ENCODE measurements at regions of chr18 and their contacts with region 1.

Region 1: DNA sequence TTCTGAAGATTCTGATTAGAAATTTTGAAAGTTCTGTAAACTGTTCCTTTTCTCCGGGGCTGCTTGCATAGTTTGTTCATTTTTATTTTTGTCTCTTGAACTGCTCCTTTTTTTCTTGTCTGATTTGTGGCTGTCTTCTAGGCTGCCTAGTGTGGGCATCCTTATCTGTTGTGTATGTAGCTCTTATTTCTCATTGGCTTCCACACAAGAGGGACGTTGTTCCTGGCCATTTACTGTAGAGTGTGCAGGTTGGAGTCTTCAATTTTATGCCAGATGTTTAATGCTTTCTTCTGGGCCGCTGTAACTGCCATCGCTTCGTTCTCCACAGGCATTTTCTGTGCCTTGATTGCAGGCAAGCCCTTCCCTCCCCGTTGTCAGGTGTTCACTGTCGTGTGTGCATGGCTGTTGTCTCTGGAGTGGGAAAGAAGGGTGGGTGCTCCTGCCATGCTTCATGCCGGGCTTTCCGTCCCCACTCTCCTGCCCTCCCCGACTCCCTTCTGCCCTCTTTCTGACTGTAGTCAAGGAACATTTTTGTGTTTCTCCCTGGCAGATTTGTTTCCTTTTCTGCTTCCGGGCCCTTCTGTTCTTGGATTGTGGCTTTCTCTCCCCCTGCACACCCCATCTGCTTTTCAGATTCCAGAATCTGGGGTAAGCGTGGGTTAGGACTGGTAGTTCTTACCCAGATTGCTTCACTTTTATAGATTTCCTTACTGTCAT is 15.5 kb downstream of the CEP192 start:
- DNase-seq: no peak
- H3K4me3 ChIP-seq: no peak overlapping the region
- H3K27ac ChIP-seq: no peak overlapping the region
- H3K4me1 ChIP-seq: no peaks in the 10 kb centered on the region
- H3K27me3 ChIP-seq: no peaks in the 10 kb centered on the region
- CTCF ChIP-seq: no peak
- POLR2A ChIP-seq: no peak

Region 2: DNA sequence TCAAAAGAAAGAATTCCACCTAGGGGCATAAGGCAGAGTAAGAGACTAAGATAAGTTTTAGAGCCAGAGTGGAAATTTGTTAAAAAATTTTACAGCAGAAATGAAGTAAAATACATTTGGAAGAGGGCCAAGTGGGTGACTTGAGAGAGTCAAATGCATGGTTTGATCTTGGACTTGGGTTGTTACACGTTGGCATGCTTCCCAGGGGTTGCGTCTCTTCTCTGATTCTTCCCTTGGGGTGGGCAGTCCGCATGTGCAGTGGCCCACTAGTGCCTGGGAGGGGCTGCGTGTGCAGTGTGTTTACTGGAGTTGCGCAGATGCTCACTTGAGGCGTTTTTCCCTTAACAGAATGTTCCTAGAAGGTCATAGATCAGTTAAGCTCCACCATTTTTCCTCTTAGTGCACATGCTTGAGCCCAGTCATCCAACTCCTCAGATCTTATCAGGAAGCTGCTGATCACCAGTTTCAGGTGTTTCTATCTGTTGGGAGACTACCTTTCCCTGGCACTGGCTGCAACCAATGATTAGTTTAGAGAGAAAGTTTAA is 45.8 kb before region 1 on chr18:
- intact Hi-C with region 1: no loop called
- DNase-seq: no peak
- H3K4me3 ChIP-seq: no peak overlapping the region
- H3K27ac ChIP-seq: no peak overlapping the region
- H3K4me1 ChIP-seq: no peaks in the 10 kb centered on the region
- H3K27me3 ChIP-seq: no peaks in the 10 kb centered on the region
- CTCF ChIP-seq: no peak
- POLR2A ChIP-seq: no peak

Region 3: GRCh38 chr18:13076886-13077285 is 70.2 kb after region 1 on chr18:
- intact Hi-C with region 1: no loop called
- DNase-seq: no peak
- H3K4me3 ChIP-seq: no peak overlapping the region
- H3K27ac ChIP-seq: no peak overlapping the region
- H3K4me1 ChIP-seq: no peaks in the 10 kb centered on the region
- H3K27me3 ChIP-seq: no peaks in the 10 kb centered on the region
- CTCF ChIP-seq: no peak
- POLR2A ChIP-seq: no peak

Region 4: GRCh38 chr18:13159579-13159978 is 152.9 kb after region 1 on chr18:
- intact Hi-C with region 1: loop called (anchors 5 kb)
- DNase-seq: no peak
- H3K4me3 ChIP-seq: no peak overlapping the region
- H3K27ac ChIP-seq: no peak overlapping the region
- H3K4me1 ChIP-seq: no peaks in the 10 kb centered on the region
- H3K27me3 ChIP-seq: no peaks in the 10 kb centered on the region
- CTCF ChIP-seq: peak; percentile 44 to 78 (median 62)
- POLR2A ChIP-seq: no peak